Heart right ventricle (tissue), 16 donors: ENCODE measurements at regions of chr13 and their contacts with region 1.

Region 1: DNA sequence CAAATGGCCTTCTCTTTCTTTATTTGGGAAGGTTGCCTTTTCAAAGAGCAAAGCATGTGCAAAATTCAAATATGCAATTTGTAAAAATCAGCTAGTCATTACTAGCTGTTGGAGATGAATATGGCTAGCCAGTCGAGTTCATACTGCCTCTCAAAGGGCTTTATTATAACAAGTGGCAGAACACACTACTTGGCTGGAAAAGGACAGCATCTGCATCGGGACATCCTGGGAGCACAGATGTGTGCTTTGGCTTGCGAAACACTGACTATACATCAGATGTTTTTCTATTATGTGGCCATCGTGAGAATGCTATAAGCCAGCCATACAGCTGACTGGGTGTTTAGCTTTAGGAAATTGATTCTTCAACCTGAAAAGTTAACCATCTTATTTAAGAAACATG is 424.2 kb downstream of the KCTD12 start:
- DNase-seq: no peak
- ATAC-seq: peak in 2 of 8 donors; percentile 39 to 42
- H3K4me3 ChIP-seq: no peak overlapping the region
- H3K27ac ChIP-seq: no peak overlapping the region
- H3K4me1 ChIP-seq: no peaks in the 10 kb centered on the region
- H3K27me3 ChIP-seq: no peaks in the 10 kb centered on the region
- CTCF ChIP-seq: no peak

Region 2: GRCh38 chr13:76225815-76226489 is 236.0 kb before region 1 on chr13:
- intact Hi-C with region 1: loop called in 1 of 10 experiments (anchors 10 kb)
- DNase-seq: peak; percentile 18 to 69
- ATAC-seq: peak; percentile 83 to 97 (median 94)
- H3K4me3 ChIP-seq: no peak overlapping the region
- H3K27ac ChIP-seq: peak overlapping the region in 4 of 10 donors; percentile 7 to 58 (median 24)
- H3K4me1 ChIP-seq: peaks cover 0 to 17% (median 7%) of the 10 kb centered on the region in 9 donors
- H3K27me3 ChIP-seq: no peaks in the 10 kb centered on the region
- CTCF ChIP-seq: no peak